Activated T-helper 1 cell treated with anti-CD3 and anti-CD28 coated beads, Interleukin-12 subunit alpha, Interleukin-12 subunit beta, Interleukin-2, Interleukin-4 antibody, amounts not matched to agents 30 ng/mL and 10 ng/mL and 1 ng/mL, durations not matched to agents 14 hours and 24 hours and 36 hours (primary cell): ENCODE measurements at regions of chr7 and their contacts with region 1.

Region 1: DNA sequence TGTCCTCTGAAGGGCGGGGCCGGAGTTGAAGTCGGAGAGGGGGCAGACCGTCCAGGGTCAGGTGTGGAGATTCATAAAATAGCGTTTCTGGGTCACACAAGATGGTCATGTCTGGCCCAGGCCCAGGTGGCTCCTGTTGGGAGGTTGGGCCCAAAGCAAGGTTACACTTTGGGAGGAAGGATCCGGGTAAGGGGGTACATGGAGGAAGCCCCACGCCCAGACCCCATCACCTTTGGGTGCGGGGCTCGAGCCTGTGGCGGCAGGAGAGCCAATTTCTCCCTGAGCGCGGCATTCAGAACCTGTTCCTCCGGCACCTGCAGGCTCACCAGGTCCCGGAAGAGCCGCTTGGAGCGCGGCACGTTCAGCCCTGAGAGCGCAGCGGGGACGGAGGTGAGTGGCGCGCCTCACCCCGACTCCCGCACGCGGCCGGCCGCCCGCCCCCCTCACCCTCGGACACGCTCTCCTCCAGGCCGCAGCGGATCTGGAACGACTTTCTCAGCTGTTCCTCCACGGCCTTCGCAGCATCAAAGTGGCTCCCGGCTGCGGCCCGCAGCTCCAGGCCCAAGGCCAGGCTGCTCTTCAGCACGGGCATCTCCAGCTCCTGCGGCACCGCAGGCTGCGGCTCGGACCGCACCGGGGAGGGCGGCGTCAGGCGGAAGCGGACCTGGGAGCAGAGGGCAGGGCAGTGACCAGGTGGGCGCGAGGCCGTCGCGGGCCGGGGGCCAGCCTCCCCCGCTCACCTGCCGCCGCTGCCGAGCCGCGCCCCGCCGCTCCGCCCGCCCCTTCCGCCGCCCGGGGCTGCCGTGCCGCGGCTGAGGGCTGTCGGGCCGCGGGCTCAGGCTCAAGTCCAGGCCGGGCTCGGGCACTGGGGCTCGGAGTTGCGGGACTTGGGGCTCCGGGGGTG is 644 bp downstream of the PPP1R35 start:
- DNase-seq: peak; percentile 42
- H3K4me3 Mint-ChIP-seq: peak overlapping the region; percentile 94
- H3K27ac Mint-ChIP-seq: peak overlapping the region; percentile 88
- H3K4me1 Mint-ChIP-seq: peaks cover 41% of the 10 kb centered on the region
- H3K27me3 Mint-ChIP-seq: no peaks in the 10 kb centered on the region

Region 2: GRCh38 chr7:100158229-100159098 is 277.2 kb before region 1 on chr7 and contains the start of gene TRAPPC14:
- intact Hi-C with region 1: no loop called
- DNase-seq: peak; percentile 89
- H3K4me3 Mint-ChIP-seq: peak within 1 kb of the TSS; percentile 81
- H3K27ac Mint-ChIP-seq: peak within 1 kb of the TSS; percentile 81
- H3K4me1 Mint-ChIP-seq: peaks cover 49% of the 10 kb centered on the region
- H3K27me3 Mint-ChIP-seq: no peaks in the 10 kb centered on the region
- total RNA-seq, gene TRAPPC14: 43.9 and 44.3 TPM in 2 replicates

Region 3: DNA sequence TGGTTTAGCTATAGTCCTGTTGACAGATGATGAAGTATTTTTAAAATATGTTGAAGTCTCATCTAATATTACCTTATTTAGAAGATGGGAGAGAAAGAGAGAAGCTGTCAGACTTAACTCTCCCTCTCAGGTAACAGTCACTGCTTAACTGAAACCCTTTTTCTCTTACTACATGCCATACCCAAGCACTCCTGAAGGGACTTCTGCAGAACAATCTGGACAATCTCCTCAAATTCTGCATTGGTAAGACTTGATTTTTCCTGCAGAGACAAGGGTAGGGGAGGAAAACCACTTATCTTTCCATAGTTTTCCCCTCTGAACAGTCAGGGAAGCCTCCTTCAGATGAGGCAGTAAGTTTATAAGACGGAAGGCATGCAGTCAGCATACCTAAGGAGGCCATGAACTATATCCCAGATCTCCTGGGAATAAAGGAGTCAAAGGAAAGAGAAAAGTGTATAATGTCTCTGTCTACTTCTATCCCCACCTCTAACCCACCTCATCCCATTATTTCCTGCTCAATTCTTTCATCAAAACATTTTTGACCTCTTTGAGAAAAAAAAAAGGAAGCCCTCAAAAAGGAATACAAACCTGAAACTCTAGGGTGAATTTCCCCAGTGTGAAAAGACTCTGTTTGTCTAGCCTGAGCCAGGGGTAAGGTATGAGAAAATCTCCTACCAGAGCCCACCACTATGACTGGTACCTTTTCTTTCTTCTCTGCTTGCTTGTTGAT is 16.6 kb before region 1 on chr7:
- intact Hi-C with region 1: no loop called
- DNase-seq: no peak
- H3K4me3 Mint-ChIP-seq: no peak overlapping the region
- H3K27ac Mint-ChIP-seq: no peak overlapping the region
- H3K4me1 Mint-ChIP-seq: peaks cover 9% of the 10 kb centered on the region
- H3K27me3 Mint-ChIP-seq: peaks cover 9% of the 10 kb centered on the region

Region 4: DNA sequence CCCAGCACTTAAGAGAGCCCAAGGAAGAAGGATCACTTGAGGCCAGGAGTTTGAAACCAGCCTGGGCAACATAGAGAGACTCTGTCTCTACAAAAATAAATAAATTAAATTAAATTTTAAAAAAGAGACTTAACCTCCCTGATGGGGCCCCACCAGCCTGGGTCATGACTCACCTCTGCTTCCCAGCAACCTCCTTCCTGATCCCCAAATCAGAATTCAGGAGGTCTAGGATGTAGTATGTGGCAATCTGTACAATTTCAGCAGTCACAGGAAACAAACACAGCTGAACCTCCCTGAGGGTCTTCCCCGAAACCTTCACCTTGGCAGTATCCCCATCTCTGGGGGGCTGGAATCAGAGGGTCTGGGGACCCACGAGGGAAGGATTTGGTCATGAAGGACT is 10.4 kb after region 1 on chr7:
- intact Hi-C with region 1: loop called (anchors 2 kb)
- DNase-seq: no peak
- H3K4me3 Mint-ChIP-seq: no peak overlapping the region
- H3K27ac Mint-ChIP-seq: no peak overlapping the region
- H3K4me1 Mint-ChIP-seq: peaks cover 20% of the 10 kb centered on the region
- H3K27me3 Mint-ChIP-seq: no peaks in the 10 kb centered on the region

Region 5: GRCh38 chr7:100478966-100479665 is 43.5 kb after region 1 on chr7 and contains the start of gene TSC22D4:
- intact Hi-C with region 1: loop called (anchors 1 kb)
- DNase-seq: peak; percentile 85
- H3K4me3 Mint-ChIP-seq: peak within 1 kb of the TSS; percentile 99
- H3K27ac Mint-ChIP-seq: peak within 1 kb of the TSS; percentile 93
- H3K4me1 Mint-ChIP-seq: peaks cover 35% of the 10 kb centered on the region
- H3K27me3 Mint-ChIP-seq: peaks cover 6% of the 10 kb centered on the region
- total RNA-seq, gene TSC22D4: 126 and 134 TPM in 2 replicates

Region 6: DNA sequence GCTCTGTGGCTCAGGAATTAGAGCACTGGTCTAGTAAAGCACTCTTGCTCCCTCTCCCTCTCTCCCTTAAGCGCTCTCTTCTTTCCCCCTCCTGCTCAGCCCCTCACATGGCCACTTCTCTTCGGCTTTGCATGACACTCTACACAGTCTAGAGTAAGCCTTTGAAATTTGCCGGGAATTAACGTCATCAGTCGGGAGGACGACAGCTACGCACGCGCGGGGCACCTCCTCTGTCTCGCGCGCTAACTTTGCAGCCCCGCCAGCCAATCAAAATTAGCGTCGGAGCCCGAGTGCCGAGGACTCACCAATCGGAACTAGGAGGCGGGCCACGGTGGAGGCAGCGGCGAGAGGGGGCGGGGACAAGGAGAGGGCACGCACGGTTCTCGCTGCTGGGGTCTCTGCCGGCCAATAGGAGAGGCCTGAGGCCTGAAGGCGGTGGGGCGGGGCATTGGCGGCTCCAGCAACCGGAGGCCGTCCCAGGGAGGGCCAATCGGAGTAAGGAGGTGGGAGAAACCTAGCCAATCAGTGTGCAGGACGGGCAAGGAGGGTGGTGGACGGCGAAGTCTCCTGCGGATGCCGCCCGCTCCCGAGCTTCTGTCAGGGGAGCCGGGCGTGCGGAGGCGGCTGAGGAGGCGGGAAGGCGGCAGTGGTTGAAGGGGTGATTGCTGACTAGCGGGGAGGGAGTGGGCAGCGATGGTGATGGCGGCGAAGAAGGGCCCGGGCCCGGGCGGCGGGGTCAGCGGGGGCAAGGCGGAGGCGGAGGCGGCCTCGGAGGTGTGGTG is 103.2 kb after region 1 on chr7 and contains the start of gene AGFG2:
- intact Hi-C with region 1: loop called (anchors 1 kb)
- DNase-seq: peak; percentile 100
- H3K4me3 Mint-ChIP-seq: peak within 1 kb of the TSS; percentile 98
- H3K27ac Mint-ChIP-seq: peak within 1 kb of the TSS; percentile 85
- H3K4me1 Mint-ChIP-seq: peaks cover 44% of the 10 kb centered on the region
- H3K27me3 Mint-ChIP-seq: no peaks in the 10 kb centered on the region
- total RNA-seq, gene AGFG2: 113 and 124 TPM in 2 replicates

Region 7: GRCh38 chr7:100611974-100612729 is 176.5 kb after region 1 on chr7 and contains the start of gene MOSPD3:
- intact Hi-C with region 1: loop called (anchors 1 kb)
- DNase-seq: peak; percentile 97
- H3K4me3 Mint-ChIP-seq: peak within 1 kb of the TSS; percentile 98
- H3K27ac Mint-ChIP-seq: peak within 1 kb of the TSS; percentile 100
- H3K4me1 Mint-ChIP-seq: peaks cover 22% of the 10 kb centered on the region
- H3K27me3 Mint-ChIP-seq: peaks cover 8% of the 10 kb centered on the region
- total RNA-seq, gene MOSPD3: 10.3 and 11.5 TPM in 2 replicates

Region 8: DNA sequence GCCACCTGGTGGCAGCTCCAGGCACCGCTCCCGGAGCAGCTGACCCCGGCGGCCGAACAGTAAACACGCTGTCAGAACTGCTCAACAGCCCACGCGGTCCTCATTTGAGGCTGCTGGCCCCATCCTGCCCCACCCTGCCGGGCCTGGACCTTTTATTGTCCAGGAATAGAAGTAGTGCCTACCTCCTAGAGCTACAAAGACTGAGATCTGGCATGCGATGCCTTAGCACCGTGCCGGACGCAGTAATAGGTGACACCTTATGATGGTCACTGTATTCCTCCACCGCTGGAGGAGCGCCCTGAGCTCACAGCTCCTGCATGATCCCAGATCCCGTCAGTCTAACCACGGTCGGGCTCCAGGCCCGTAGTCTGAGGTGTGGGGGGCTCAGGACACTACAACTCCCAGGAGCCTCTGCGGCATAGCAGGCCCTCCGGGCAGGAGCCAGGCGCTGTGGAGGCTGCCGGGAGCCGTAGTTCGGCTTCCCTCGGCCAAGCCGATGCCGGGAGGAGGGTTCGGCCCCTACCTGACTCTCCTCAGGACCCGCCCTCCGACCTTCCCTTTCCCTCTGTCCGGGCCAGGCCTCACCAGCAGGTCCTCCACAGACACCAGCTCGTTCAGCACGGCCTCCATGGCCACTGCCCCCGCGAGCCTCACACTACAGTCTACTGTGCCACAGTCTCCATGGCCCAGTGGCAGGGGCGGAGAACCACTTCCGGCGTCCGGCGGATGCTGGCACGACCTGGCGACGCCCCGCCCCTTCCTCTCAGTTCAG is 808.9 kb after region 1 on chr7 and contains the start of gene FIS1:
- intact Hi-C with region 1: loop called (anchors 1 kb)
- DNase-seq: peak; percentile 91
- H3K4me3 Mint-ChIP-seq: peak within 1 kb of the TSS; percentile 94
- H3K27ac Mint-ChIP-seq: peak within 1 kb of the TSS; percentile 98
- H3K4me1 Mint-ChIP-seq: peaks cover 24% of the 10 kb centered on the region
- H3K27me3 Mint-ChIP-seq: no peaks in the 10 kb centered on the region
- total RNA-seq, gene FIS1: 138 and 143 TPM in 2 replicates